HepG2 (cell line): ENCODE measurements at regions of chr2 and their contacts with region 1.

Region 1: DNA sequence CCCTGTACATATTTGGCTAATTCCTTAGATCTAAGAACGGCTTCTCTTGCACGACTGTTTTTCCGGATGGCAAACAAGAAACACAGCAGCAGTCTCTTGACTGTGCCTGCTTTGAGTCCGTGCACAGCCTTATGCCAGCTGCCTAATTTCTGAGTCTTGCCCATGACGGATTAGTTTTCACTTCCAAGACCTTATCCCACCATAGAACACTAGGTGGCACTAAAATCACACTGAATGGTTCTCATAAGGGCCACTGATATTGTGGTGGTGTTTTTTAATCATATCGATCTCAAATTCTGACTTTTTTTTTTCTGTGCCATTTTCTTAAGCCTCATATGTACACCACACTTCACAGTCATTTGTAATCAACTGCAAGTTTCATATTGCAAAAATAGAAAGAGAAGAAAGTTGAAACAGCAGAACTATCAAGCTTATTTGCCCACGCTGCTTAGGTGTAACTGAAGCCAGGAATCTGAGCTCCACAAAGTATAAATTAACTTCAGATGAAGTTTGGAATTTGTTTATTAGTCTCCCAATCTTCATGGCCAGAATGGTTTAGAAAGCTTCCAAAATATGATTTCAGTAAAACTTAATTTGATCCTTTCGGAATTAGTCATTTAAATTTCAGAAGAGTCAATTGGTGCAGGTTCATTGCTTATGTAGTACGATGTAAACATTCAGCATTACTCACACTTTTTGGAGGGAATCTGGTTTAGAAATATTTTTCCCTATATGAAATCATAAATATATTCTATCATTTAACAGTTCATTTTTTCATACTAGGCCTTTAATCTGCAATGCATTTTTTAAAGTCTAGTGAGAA is 45.5 kb upstream of the SCN7A start:
- DNase-seq: peak; percentile 64
- ATAC-seq: peak; percentile 98
- H3K4me3 ChIP-seq: no peak overlapping the region
- H3K27ac ChIP-seq: no peak overlapping the region
- H3K4me1 ChIP-seq: no peaks in the 10 kb centered on the region
- H3K27me3 ChIP-seq: no peaks in the 10 kb centered on the region
- CTCF ChIP-seq: peak; percentile 92
- EP300 ChIP-seq: no peak
- POLR2A ChIP-seq: no peak
- RAD21 ChIP-seq: peak; percentile 83

Region 2: GRCh38 chr2:166895243-166895642 is 355.7 kb after region 1 on chr2:
- CTCF ChIA-PET with region 1: no interaction called
- POLR2A ChIA-PET with region 1: no interaction called
- in situ Hi-C with region 1: loop called (anchors 10 kb)
- intact Hi-C with region 1: loop called (anchors 1 kb)
- DNase-seq: no peak
- ATAC-seq: no peak; the same call in 2 of the 3 replicates
- H3K4me3 ChIP-seq: no peak overlapping the region
- H3K27ac ChIP-seq: no peak overlapping the region
- H3K4me1 ChIP-seq: no peaks in the 10 kb centered on the region
- H3K27me3 ChIP-seq: no peaks in the 10 kb centered on the region
- CTCF ChIP-seq: peak; percentile 35
- EP300 ChIP-seq: no peak
- POLR2A ChIP-seq: no peak
- RAD21 ChIP-seq: no peak

Region 3: GRCh38 chr2:167212014-167212648 is 672.6 kb after region 1 on chr2:
- CTCF ChIA-PET with region 1: interaction called, 22 read pairs
- POLR2A ChIA-PET with region 1: no interaction called
- in situ Hi-C with region 1: loop called (anchors 10 kb)
- intact Hi-C with region 1: loop called (anchors 1 kb)
- DNase-seq: peak; percentile 50
- ATAC-seq: peak; percentile 72
- H3K4me3 ChIP-seq: no peak overlapping the region
- H3K27ac ChIP-seq: no peak overlapping the region
- H3K4me1 ChIP-seq: no peaks in the 10 kb centered on the region
- H3K27me3 ChIP-seq: no peaks in the 10 kb centered on the region; a peak in 1 of 5 replicates
- CTCF ChIP-seq: peak; percentile 82
- EP300 ChIP-seq: no peak
- POLR2A ChIP-seq: no peak
- RAD21 ChIP-seq: peak; percentile 58; the same call in 1 of the 2 replicates

Region 4: GRCh38 chr2:167331636-167332232 is 792.2 kb after region 1 on chr2:
- CTCF ChIA-PET with region 1: no interaction called
- POLR2A ChIA-PET with region 1: no interaction called
- in situ Hi-C with region 1: no loop called
- intact Hi-C with region 1: loop called (anchors 2 kb)
- DNase-seq: peak; percentile 11
- ATAC-seq: peak; percentile 97
- H3K4me3 ChIP-seq: no peak overlapping the region
- H3K27ac ChIP-seq: no peak overlapping the region
- H3K4me1 ChIP-seq: no peaks in the 10 kb centered on the region
- H3K27me3 ChIP-seq: no peaks in the 10 kb centered on the region
- CTCF ChIP-seq: peak; percentile 49
- EP300 ChIP-seq: no peak
- POLR2A ChIP-seq: no peak
- RAD21 ChIP-seq: no peak

Region 5: GRCh38 chr2:167550448-167550847 is 1010.9 kb after region 1 on chr2:
- CTCF ChIA-PET with region 1: no interaction called
- POLR2A ChIA-PET with region 1: no interaction called
- in situ Hi-C with region 1: no loop called
- intact Hi-C with region 1: loop called (anchors 1 kb)
- DNase-seq: peak; percentile 6
- ATAC-seq: peak; percentile 80
- H3K4me3 ChIP-seq: no peak overlapping the region
- H3K27ac ChIP-seq: no peak overlapping the region
- H3K4me1 ChIP-seq: peaks cover 10% of the 10 kb centered on the region
- H3K27me3 ChIP-seq: no peaks in the 10 kb centered on the region
- CTCF ChIP-seq: peak; percentile 50
- EP300 ChIP-seq: no peak
- POLR2A ChIP-seq: no peak
- RAD21 ChIP-seq: no peak